ENCODE measurements at regions of chr2 and their contacts with region 1.

Region 1: DNA sequence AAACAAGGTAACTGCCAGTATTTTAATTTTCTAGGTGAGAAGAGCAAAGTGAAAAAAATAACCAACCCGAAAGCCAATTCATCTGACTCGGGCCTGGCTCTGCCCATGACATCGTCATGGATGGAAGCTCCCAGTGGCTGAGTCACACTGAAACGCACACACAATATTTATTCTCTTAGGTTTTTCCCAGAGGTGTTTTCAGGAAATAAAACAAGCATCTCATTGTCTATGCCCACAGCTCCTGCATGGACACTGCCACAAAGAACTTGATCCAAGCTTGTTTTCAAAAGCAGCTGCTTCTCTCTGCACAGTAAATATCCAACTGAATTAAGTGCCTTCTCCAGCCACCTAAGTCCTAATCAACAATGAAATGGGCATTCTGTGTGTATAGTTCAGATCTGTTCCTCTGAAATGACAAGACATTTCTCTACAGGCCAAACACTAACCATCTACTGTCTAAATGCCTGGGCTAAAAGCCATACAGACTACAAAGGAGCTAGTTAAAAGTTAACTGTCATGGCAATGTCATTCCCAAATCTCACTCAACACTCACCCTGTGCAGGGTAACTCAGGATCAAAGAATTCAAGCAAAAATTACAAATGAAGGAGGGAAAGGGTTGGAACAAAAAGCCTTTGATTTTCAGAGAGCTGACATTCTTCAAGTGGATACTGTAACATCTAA is 62.9 kb downstream of the RPL31 start:
- DNase-seq: peak; percentile 96
- H3K4me3 ChIP-seq: no peak overlapping the region
- H3K27ac ChIP-seq: peak overlapping the region; percentile 99
- H3K4me1 ChIP-seq: peaks cover 32% of the 10 kb centered on the region
- H3K27me3 ChIP-seq: no peaks in the 10 kb centered on the region
- CTCF ChIP-seq: no peak

Region 2: GRCh38 chr2:101012706-101013181 is 52.3 kb before region 1 on chr2:
- CTCF ChIA-PET with region 1: no interaction called
- dilution Hi-C with region 1: loop called (anchors 10 kb)
- in situ Hi-C with region 1: no loop called
- intact Hi-C with region 1: no loop called
- DNase-seq: peak; percentile 20
- H3K4me3 ChIP-seq: no peak overlapping the region
- H3K27ac ChIP-seq: no peak overlapping the region
- H3K4me1 ChIP-seq: no peaks in the 10 kb centered on the region
- H3K27me3 ChIP-seq: no peaks in the 10 kb centered on the region
- CTCF ChIP-seq: peak; percentile 76

Region 3: GRCh38 chr2:101113396-101114267 is 48.6 kb after region 1 on chr2:
- CTCF ChIA-PET with region 1: no interaction called
- dilution Hi-C with region 1: no loop called
- in situ Hi-C with region 1: no loop called
- intact Hi-C with region 1: loop called (anchors 5 kb)
- DNase-seq: peak; percentile 93
- H3K4me3 ChIP-seq: no peak overlapping the region
- H3K27ac ChIP-seq: peak overlapping the region; percentile 71
- H3K4me1 ChIP-seq: peaks cover 37% of the 10 kb centered on the region
- H3K27me3 ChIP-seq: no peaks in the 10 kb centered on the region
- CTCF ChIP-seq: no peak

Region 4: DNA sequence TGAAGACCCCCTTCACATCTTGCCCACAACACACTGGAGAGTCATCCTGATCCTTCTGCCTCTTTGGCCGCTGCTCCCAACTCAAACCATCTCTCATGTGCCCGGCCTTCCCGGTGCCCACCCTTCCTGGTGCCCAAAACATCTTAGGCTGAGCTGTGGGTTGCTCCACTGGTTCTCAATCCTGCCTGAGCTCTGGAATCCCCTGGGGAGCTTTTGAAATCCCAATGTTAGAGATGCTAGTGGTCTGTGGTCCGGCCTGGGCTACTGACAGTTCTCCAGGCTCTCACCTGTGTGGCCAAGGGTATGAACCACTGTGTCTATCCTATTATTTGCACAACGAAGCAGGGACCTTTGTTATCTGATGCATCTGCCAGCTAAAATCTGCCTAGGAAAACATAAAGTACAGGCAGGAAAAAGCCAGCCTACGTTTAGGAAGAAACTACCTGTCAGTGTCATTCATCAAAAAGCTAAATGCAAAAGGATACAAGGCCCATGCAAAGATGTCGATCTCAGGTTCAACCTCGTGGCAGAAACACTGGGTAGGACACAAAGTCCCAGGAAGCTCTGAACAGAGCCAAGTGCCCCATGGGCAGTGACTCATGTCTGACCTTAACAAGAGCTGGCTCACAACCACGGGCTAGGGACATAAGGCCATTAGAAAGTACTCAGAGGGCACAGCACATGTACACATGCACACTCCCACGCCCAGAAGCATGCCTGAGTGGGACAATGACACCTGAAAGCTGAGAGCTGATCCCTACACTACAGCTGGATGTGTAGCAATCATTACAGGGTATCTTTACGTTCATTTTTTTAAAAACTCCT is 55.4 kb after region 1 on chr2:
- CTCF ChIA-PET with region 1: no interaction called
- dilution Hi-C with region 1: loop called (anchors 5 kb)
- in situ Hi-C with region 1: no loop called
- intact Hi-C with region 1: loop called (anchors 2 kb)
- DNase-seq: peak; percentile 87
- H3K4me3 ChIP-seq: no peak overlapping the region
- H3K27ac ChIP-seq: peak overlapping the region; percentile 62
- H3K4me1 ChIP-seq: peaks cover 52% of the 10 kb centered on the region
- H3K27me3 ChIP-seq: no peaks in the 10 kb centered on the region
- CTCF ChIP-seq: no peak